ENCODE measurements at regions of chr12 and their contacts with region 1.

Region 1: DNA sequence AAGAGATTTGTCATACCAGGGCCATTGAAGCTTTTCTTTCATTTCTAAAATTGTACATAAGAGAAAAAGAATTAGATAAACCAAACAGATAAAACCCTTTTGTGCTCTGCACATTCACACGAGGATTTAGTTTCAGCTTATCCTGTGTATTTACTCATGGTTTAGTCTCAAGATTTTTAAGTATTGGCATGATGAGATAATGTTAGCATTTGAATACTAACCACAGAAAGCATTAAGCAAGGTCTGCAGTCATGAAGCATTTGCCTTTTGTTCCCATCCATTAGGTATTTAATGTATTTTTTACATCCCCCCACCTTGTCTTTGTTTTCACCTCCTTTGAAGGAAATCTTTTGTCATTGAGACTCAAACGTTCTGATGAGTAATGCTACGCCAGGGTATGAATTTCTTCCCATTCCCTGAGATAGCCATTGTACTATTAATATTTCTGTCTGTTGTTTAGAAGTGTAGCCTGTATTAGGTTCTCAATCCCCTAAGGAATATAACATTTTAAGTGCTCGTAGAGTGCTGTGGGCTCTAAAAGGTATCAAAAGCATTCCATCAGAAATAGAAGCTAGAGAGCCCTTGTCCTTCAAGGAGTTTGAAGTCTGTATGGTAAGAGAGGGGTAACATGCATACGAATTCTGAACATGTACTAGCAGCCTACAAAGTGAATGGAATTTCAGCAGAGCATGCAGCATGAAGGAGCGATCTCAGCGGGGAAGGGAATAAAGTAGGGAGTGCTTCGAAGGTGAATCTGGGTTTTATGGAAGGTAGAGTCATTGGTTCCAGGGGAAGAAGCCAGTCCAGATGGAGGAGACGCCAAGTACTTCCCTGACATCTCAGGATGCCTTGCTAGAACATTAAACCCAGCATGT is 22.3 kb downstream of the CRADD start:
- DNase-seq: no peak
- ATAC-seq: no peak

Region 2: DNA sequence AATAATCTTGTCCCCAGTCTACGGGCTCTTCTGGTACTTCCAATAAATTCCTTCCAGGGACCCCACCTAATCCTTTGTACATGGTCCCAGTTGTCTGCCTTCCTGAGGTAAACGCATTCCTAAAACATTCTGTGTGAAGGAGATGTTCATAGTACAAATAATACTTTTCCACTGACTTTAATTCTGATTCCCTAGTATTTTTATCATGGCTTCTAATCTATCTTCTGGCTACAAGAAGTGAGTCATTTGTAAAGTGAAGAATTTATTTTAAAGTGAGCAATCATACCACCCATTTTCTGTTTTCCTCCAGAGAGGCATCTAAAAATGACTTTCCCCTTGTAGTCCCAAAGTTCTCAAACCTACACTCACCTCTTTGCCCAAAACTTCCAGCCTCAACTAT is 387.7 kb before region 1 on chr12:
- intact Hi-C with region 1: no loop called
- DNase-seq: no peak
- ATAC-seq: no peak

Region 3: DNA sequence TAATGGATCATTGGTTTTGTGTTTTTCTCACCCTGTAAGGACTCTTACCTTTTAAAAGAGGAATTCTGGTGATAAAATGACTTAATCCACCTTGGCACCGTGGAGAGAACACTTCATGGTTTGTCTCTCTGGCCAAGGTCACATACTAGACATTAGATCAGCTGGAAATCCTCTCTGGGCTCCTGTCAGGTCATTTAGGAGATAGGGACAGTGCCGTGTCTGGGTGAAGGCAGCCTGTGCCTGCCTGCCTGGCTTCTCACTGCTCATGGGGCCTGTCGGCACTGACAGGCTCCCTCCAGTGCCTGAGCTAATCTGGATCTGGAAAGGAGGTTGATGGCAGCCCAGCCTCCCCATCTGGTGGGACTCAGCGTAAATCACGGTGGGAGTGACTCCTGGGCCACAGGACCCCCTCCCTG is 16.7 kb before region 1 on chr12:
- intact Hi-C with region 1: loop called (anchors 2 kb)
- DNase-seq: no peak
- ATAC-seq: peak; percentile 88

Region 4: GRCh38 chr12:93778306-93778705 is 78.8 kb after region 1 on chr12:
- intact Hi-C with region 1: no loop called
- DNase-seq: no peak
- ATAC-seq: peak; percentile 90

Region 5: GRCh38 chr12:94149119-94149780 is 449.7 kb after region 1 on chr12:
- intact Hi-C with region 1: no loop called
- DNase-seq: peak; percentile 84
- ATAC-seq: peak; percentile 37

Measured in Right ventricle myocardium inferior (tissue), 1 donor.